Activated CD4-positive, alpha-beta T cell treated with anti-CD3 and anti-CD28 coated beads, Interleukin-2, amount 10 ng/mL, durations not matched to agents 24 days and 14 days (primary cell): ENCODE measurements at regions of chr17 and their contacts with region 1.

Region 1: GRCh38 chr17:9273428-9274391 is 252.4 kb downstream of the NTN1 start:
- DNase-seq: no peak
- H3K4me3 Mint-ChIP-seq: peak overlapping the region; percentile 27
- H3K27ac Mint-ChIP-seq: peak overlapping the region; percentile 88
- H3K4me1 Mint-ChIP-seq: peaks cover 16% of the 10 kb centered on the region
- H3K27me3 Mint-ChIP-seq: no peaks in the 10 kb centered on the region

Region 2: DNA sequence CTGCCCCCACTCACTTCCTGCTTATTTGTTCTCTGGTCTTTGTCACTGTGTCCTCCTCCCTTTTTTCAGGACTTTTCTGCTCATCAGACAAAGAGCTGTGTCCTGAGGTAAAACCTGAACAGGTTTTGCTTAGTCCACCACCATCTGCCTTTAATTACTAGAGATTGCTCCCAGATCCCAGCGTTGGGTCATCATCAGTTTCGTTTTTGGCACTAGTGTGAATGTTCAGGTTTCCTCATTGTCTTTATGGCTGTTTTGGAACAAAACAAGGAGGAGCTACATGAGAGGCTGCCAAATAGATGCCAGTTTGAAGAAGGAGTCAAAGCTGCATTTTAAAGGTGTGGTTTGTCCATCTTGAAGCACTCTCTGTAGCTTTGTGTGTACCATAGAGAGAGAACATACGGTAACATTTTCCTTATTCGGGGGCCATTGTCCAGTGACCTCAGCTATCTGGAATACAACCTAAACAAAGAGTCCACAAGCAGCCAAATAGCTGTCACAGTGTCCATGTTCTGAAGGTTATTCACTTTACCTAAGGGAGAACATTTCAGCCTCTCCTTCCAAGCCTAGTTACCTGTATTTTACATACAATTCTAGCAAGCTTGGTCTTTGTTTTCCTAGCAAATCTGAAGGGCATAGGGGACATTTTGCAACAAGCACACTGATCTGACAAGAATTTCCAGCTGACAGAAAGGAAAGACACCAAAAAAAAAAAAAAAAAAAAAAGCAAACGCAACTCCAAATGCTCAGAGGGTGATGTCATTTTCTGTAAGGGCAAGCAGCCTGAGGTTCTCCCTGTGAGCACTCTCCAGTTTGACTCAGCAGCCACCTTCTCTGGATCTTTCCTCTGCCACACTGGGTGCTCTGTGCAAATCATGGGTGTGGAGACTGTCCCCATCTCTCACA is 56.3 kb before region 1 on chr17:
- intact Hi-C with region 1: no loop called
- DNase-seq: no peak
- H3K4me3 Mint-ChIP-seq: no peak overlapping the region
- H3K27ac Mint-ChIP-seq: no peak overlapping the region
- H3K4me1 Mint-ChIP-seq: no peaks in the 10 kb centered on the region
- H3K27me3 Mint-ChIP-seq: no peaks in the 10 kb centered on the region

Region 3: DNA sequence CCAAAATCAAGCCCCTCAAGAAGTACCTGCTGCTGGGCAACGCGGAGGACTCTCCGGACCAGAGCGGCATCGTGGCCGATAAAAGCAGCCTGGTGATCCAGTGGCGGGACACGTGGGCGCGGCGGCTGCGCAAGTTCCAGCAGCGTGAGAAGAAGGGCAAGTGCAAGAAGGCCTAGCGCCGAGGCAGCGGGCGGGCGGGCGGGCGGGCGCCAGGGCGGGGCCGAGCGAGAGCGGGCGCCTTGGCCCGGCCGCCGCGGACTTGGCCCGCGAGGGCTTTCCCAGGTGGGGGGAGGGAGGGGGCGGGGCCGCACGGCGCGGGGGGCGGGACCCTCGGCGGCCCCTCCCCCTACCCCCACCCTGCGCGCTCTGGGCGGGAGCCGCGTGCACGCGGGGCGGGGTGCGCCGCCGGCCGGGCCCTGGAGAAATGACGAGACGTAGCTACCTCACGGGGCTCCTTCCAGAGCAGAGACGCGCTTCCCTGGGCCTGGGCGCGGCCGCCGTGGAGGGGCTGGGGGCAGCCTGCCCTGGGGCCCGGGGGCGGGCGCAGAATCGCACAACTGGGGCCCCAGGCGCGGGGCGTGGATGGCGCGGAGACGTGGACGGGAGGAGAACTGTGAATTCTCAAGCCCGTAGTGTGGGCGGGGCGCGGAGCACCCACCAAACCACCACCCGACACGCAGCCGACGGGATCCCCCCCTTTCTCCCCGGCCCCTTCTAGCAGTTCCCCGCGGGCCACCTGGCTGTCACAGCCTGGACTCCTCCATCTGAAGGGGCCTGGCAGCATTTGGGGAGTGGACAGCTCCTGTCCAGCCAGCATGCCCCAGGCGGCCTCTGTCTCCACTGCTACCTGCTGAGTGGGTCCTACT is 33.7 kb before region 1 on chr17:
- intact Hi-C with region 1: loop called (anchors 5 kb)
- DNase-seq: peak; percentile 90
- H3K4me3 Mint-ChIP-seq: peak overlapping the region; percentile 84
- H3K27ac Mint-ChIP-seq: peak overlapping the region; percentile 70
- H3K4me1 Mint-ChIP-seq: peaks cover 8% of the 10 kb centered on the region
- H3K27me3 Mint-ChIP-seq: no peaks in the 10 kb centered on the region

Region 4: GRCh38 chr17:9256751-9257629 is 16.7 kb before region 1 on chr17:
- intact Hi-C with region 1: loop called (anchors 1 kb)
- DNase-seq: no peak
- H3K4me3 Mint-ChIP-seq: no peak overlapping the region
- H3K27ac Mint-ChIP-seq: no peak overlapping the region
- H3K4me1 Mint-ChIP-seq: peaks cover 17% of the 10 kb centered on the region
- H3K27me3 Mint-ChIP-seq: no peaks in the 10 kb centered on the region

Region 5: GRCh38 chr17:9307292-9308042 is 33.8 kb after region 1 on chr17:
- intact Hi-C with region 1: no loop called
- DNase-seq: no peak
- H3K4me3 Mint-ChIP-seq: no peak overlapping the region
- H3K27ac Mint-ChIP-seq: no peak overlapping the region
- H3K4me1 Mint-ChIP-seq: no peaks in the 10 kb centered on the region
- H3K27me3 Mint-ChIP-seq: no peaks in the 10 kb centered on the region